Mammary epithelial cell (primary cell): ENCODE measurements at regions of chr18 and their contacts with region 1.

Region 1: DNA sequence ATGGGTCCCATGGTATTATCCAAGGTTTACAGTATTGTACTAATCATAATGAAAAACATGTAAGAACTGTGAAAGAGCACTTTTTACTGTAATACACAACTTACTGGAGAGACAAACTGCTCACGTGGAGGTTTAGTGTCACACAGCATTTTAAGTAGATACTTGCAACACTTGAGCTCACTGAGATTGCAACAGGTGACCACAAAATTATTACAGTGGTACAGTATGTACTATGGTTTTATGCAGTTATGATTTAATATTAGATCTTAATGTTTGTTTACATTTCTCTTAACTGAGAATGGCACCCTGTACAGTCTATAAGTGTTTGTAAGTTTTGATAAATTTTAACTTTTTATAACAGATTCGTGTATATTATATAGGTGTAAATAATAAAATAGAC is 118.6 kb upstream of the SKOR2 start:
- DNase-seq: no peak
- H3K4me3 ChIP-seq: no peak overlapping the region
- H3K27ac ChIP-seq: no peak overlapping the region
- H3K4me1 ChIP-seq: no peaks in the 10 kb centered on the region
- H3K27me3 ChIP-seq: no peaks in the 10 kb centered on the region
- CTCF ChIP-seq: no peak

Region 2: DNA sequence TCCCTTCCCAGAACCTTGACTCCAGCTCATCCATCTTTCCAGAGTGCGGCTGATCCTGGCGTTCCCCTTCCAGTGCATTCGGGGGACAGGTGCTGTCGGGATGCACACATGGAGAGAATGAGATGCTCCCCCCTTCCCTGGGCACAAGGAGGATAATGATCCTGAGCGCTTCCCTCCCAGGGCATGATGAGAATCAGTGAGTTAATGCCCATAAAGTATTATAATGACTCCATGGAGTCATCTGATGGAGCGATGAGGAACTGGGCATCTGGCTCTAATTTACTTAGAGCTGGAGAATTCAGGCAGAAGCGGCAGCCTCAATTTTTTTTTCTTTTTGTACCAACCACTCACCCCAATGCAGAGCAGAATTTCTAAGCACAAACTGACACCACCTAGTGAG is 39.0 kb before region 1 on chr18:
- CTCF ChIA-PET with region 1: interaction called, 14 read pairs
- dilution Hi-C with region 1: no loop called
- in situ Hi-C with region 1: no loop called
- intact Hi-C with region 1: no loop called
- DNase-seq: no peak
- H3K4me3 ChIP-seq: no peak overlapping the region
- H3K27ac ChIP-seq: no peak overlapping the region
- H3K4me1 ChIP-seq: no peaks in the 10 kb centered on the region
- H3K27me3 ChIP-seq: no peaks in the 10 kb centered on the region
- CTCF ChIP-seq: no peak